ENCODE measurements at regions of chr6 and their contacts with region 1.

Region 1: GRCh38 chr6:29955783-29956182 is 13.5 kb downstream of the HLA-A start:
- DNase-seq: no peak
- ATAC-seq: peak in 1 of 2 donors; percentile 24
- H3K4me3 ChIP-seq: no peak overlapping the region
- H3K27ac ChIP-seq: no peak overlapping the region
- H3K4me1 ChIP-seq: peaks cover 9 to 14% of the 10 kb centered on the region in 2 donors
- H3K27me3 ChIP-seq: no peaks in the 10 kb centered on the region
- CTCF ChIP-seq: no peak
- POLR2A ChIP-seq: no peak

Region 2: DNA sequence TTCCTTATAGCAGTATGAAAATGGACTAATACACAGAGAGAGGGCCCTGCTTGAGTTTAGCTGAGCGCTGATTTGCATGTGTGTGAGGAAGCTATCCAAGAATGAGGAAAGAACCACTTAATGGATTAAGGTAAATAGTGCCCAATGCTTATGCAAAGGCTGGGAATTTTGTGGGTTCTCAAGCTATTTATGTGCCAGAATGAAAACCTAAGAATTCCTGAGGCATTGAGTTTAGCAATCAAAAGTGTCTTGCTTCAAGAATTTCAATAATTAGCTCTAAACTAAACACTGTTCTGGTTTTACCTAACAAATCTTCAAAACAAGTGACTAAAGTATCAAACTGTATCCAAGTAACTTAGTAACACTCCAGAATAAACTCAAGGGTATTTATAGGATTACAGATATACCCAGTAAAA is 661.3 kb before region 1 on chr6:
- in situ Hi-C with region 1: no loop called
- intact Hi-C with region 1: no loop called
- DNase-seq: no peak
- ATAC-seq: no peak
- H3K4me3 ChIP-seq: no peak overlapping the region
- H3K27ac ChIP-seq: no peak overlapping the region
- H3K4me1 ChIP-seq: no peaks in the 10 kb centered on the region
- H3K27me3 ChIP-seq: no peaks in the 10 kb centered on the region
- CTCF ChIP-seq: no peak
- POLR2A ChIP-seq: no peak

Region 3: GRCh38 chr6:29414588-29414987 is 541.2 kb before region 1 on chr6 and contains the start of gene OR12D1:
- in situ Hi-C with region 1: no loop called
- intact Hi-C with region 1: no loop called
- DNase-seq: no peak
- ATAC-seq: no peak
- H3K4me3 ChIP-seq: no peak within 1 kb of the TSS
- H3K27ac ChIP-seq: no peak within 1 kb of the TSS
- H3K4me1 ChIP-seq: no peaks in the 10 kb centered on the region
- H3K27me3 ChIP-seq: no peaks in the 10 kb centered on the region
- CTCF ChIP-seq: no peak
- POLR2A ChIP-seq: no peak
- total RNA-seq, gene OR12D1: not detected

Region 4: DNA sequence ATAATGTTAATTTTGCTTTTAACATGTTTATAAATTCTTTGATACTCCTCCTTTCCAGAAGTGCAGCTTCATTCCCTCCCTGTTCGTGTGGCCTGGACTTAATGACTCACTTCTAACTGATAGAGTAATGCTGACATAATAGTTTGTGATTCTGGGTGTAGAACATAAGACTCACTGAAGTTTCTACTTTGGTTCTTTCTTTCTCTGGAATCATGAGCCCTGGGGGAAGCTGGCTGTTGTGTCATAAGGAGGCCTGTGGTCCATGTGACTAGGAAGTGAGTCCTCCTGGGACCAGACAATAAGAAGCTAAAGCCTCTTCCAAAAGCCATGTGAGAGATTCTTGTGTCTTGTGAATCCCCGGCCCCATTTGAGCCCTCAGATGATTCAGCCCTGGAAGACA is 158.6 kb before region 1 on chr6:
- in situ Hi-C with region 1: no loop called
- intact Hi-C with region 1: loop called (anchors 5 kb)
- DNase-seq: no peak
- ATAC-seq: no peak
- H3K4me3 ChIP-seq: no peak overlapping the region
- H3K27ac ChIP-seq: no peak overlapping the region
- H3K4me1 ChIP-seq: peaks cover 0 to 6% of the 10 kb centered on the region in 2 donors
- H3K27me3 ChIP-seq: peaks cover 24 to 40% (median 28%) of the 10 kb centered on the region in 3 donors
- CTCF ChIP-seq: no peak
- POLR2A ChIP-seq: no peak